ENCODE measurements at regions of chr22 and their contacts with region 1.

Region 1: GRCh38 chr22:23128269-23129108 is 13.3 kb downstream of the RSPH14 start:
- DNase-seq: no peak
- ATAC-seq: peak; percentile 81

Region 2: DNA sequence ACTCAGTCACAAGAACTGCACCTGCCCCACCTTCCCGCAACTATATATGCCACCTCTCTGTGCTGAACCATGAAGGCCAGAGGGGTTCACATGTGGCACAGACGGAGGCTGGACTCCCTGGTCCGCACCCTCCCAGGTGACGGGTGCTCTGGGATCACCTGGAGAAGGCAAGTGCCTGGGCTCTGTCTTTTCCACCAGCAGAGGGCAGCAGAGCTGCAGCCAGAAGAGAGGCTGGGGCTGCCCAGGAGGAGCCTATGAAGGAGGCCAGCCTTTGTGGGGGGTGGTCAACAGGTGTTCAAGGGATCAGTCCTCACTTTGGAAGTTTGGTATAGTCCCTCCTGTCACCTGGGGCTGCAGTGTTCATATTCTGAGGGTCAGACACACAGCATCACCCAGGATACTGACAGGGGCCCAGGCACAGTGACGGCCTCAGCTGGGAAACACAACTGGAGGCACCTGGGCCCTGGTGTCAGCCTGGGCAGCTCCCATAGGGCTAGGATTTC is 280.1 kb before region 1 on chr22:
- intact Hi-C with region 1: loop called (anchors 10 kb)
- DNase-seq: no peak
- ATAC-seq: peak; percentile 52